CD8-positive, alpha-beta memory T cell (primary cell): ENCODE measurements at regions of chr15 and their contacts with region 1.

Region 1: GRCh38 chr15:60362321-60363086 is 35.3 kb downstream of the ANXA2 start:
- DNase-seq: no peak
- H3K4me3 ChIP-seq: no peak overlapping the region
- H3K4me3 Mint-ChIP-seq: no peak overlapping the region
- H3K27ac ChIP-seq: no peak overlapping the region
- H3K27ac Mint-ChIP-seq: peak overlapping the region; percentile 5 to 96 (median 48)
- H3K4me1 ChIP-seq: peaks cover 11% of the 10 kb centered on the region
- H3K4me1 Mint-ChIP-seq: peaks cover 20 to 34% (median 28%) of the 10 kb centered on the region in 3 donors
- H3K27me3 ChIP-seq: no peaks in the 10 kb centered on the region
- H3K27me3 Mint-ChIP-seq: peaks cover 0 to 3% of the 10 kb centered on the region in 2 donors

Region 2: GRCh38 chr15:60250316-60250715 is 112.2 kb before region 1 on chr15:
- CTCF ChIA-PET with region 1: no interaction called
- POLR2A ChIA-PET with region 1: no interaction called
- DNase-seq: no peak
- H3K4me3 ChIP-seq: no peak overlapping the region
- H3K4me3 Mint-ChIP-seq: no peak overlapping the region
- H3K27ac ChIP-seq: no peak overlapping the region
- H3K27ac Mint-ChIP-seq: no peak overlapping the region
- H3K4me1 ChIP-seq: no peaks in the 10 kb centered on the region
- H3K4me1 Mint-ChIP-seq: no peaks in the 10 kb centered on the region
- H3K27me3 ChIP-seq: no peaks in the 10 kb centered on the region
- H3K27me3 Mint-ChIP-seq: peaks cover 19 to 40% of the 10 kb centered on the region in 2 donors

Region 3: DNA sequence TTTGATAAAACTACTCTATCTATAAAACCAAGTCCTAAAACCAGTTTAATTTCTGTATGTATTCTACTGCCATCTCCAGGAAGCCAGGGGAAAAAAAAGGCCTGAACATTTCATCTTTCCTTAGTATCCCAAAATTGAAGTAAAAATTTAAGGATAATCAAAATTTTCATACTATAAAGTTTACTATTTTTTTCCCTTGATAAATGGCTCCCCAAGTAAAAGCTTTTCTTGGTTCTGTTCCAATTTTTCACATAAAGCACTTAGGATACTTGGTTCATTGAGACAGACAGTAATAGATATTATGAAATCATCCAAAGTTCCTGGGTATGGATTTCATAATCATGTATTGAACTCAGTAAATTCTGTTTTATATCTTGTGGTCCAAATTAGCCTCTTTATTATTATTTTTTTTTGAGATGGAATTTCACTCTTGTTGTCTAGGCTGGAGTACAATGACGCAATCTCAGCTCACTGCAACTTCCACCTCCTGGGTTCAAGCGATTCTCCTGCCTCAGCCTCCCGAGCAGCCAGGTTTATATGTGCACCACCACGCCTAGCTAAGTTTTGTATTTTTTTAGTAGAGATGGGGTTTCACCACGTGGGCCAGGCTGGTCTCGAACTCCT is 81.9 kb after region 1 on chr15:
- CTCF ChIA-PET with region 1: interaction called, 14 read pairs
- POLR2A ChIA-PET with region 1: no interaction called
- DNase-seq: no peak
- H3K4me3 ChIP-seq: no peak overlapping the region
- H3K4me3 Mint-ChIP-seq: no peak overlapping the region
- H3K27ac ChIP-seq: no peak overlapping the region
- H3K27ac Mint-ChIP-seq: peak overlapping the region in 1 of 8 donors; percentile 72
- H3K4me1 ChIP-seq: no peaks in the 10 kb centered on the region
- H3K4me1 Mint-ChIP-seq: peaks cover 7 to 11% (median 8%) of the 10 kb centered on the region in 3 donors
- H3K27me3 ChIP-seq: no peaks in the 10 kb centered on the region
- H3K27me3 Mint-ChIP-seq: no peaks in the 10 kb centered on the region

Region 4: GRCh38 chr15:60478566-60479360 is 116.3 kb after region 1 on chr15 and contains the start of gene ICE2:
- CTCF ChIA-PET with region 1: interaction called, 4 read pairs
- POLR2A ChIA-PET with region 1: interaction called, 10 read pairs
- DNase-seq: peak; percentile 94 to 97 (median 95)
- H3K4me3 ChIP-seq: peak within 1 kb of the TSS; percentile 92
- H3K4me3 Mint-ChIP-seq: peak within 1 kb of the TSS; percentile 94 to 99 (median 96)
- H3K27ac ChIP-seq: peak within 1 kb of the TSS; percentile 93
- H3K27ac Mint-ChIP-seq: peak within 1 kb of the TSS; percentile 96 to 100 (median 98)
- H3K4me1 ChIP-seq: peaks cover 35% of the 10 kb centered on the region
- H3K4me1 Mint-ChIP-seq: peaks cover 50 to 78% (median 63%) of the 10 kb centered on the region in 3 donors
- H3K27me3 ChIP-seq: no peaks in the 10 kb centered on the region
- H3K27me3 Mint-ChIP-seq: peaks cover 0 to 2% of the 10 kb centered on the region in 2 donors
- total RNA-seq, gene ICE2: 51.7 to 59.5 TPM